ENCODE measurements at regions of chr1 and their contacts with region 1.

Region 1: GRCh38 chr1:116817582-116818064 is 63.4 kb downstream of the CD2 start:
- DNase-seq: peak; percentile 58
- H3K4me3 Mint-ChIP-seq: no peak overlapping the region
- H3K27ac Mint-ChIP-seq: peak overlapping the region; percentile 61
- H3K4me1 Mint-ChIP-seq: peaks cover 50% of the 10 kb centered on the region
- H3K27me3 Mint-ChIP-seq: no peaks in the 10 kb centered on the region

Region 2: DNA sequence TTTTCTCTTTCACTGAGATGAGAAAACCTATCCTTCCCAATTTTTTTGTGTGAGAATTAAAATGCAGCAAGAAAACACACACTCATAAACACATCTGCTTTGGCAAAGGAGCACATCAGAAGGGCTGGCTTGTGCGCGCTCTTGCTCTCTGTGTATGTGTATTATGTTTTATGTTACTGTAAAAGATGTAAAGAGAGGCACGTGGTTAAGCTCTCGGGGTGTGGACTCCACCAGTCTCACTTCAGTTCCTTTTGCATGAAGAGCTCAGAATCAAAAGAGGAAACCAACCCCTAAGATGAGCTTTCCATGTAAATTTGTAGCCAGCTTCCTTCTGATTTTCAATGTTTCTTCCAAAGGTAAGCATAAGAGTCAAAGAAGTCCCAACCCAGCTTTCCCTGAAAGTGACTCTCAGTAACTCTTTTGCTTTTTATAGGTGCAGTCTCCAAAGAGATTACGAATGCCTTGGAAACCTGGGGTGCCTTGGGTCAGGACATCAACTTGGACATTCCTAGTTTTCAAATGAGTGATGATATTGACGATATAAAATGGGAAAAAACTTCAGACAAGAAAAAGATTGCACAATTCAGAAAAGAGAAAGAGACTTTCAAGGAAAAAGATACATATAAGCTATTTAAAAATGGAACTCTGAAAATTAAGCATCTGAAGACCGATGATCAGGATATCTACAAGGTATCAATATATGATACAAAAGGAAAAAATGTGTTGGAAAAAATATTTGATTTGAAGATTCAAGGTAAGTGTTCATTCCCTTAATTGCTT is 63.2 kb before region 1 on chr1 and contains the start of gene CD2:
- intact Hi-C with region 1: loop called (anchors 1 kb)
- DNase-seq: no peak
- H3K4me3 Mint-ChIP-seq: peak within 1 kb of the TSS; percentile 99
- H3K27ac Mint-ChIP-seq: peak within 1 kb of the TSS; percentile 97
- H3K4me1 Mint-ChIP-seq: peaks cover 32% of the 10 kb centered on the region
- H3K27me3 Mint-ChIP-seq: no peaks in the 10 kb centered on the region
- total RNA-seq, gene CD2: 284 and 304 TPM in 2 replicates

Region 3: GRCh38 chr1:116794804-116795481 is 22.7 kb before region 1 on chr1:
- intact Hi-C with region 1: no loop called
- DNase-seq: no peak
- H3K4me3 Mint-ChIP-seq: no peak overlapping the region
- H3K27ac Mint-ChIP-seq: no peak overlapping the region
- H3K4me1 Mint-ChIP-seq: peaks cover 56% of the 10 kb centered on the region
- H3K27me3 Mint-ChIP-seq: no peaks in the 10 kb centered on the region

Region 4: DNA sequence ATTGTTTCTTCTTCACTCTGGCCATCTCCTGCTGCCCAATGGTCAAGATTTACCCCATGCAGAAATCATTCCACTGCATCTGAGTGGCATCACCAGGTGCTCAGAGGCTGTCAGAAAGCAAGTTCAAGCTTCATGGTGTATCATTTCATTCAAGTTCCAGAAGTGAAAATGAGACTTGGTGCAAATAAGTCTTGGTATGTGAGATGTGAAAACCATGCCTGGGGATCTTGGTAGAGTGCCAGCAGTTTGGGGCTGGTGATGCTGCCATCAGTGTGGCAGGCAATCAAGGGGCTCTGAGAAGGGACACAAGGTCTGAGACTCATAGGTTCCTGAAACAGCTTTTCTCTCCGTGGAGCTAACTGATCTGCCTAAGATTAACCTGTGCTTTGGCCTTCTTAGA is 11.4 kb before region 1 on chr1:
- intact Hi-C with region 1: loop called (anchors 1 kb)
- DNase-seq: peak; percentile 36
- H3K4me3 Mint-ChIP-seq: peak overlapping the region; percentile 79
- H3K27ac Mint-ChIP-seq: peak overlapping the region; percentile 90
- H3K4me1 Mint-ChIP-seq: peaks cover 84% of the 10 kb centered on the region
- H3K27me3 Mint-ChIP-seq: no peaks in the 10 kb centered on the region

Region 5: GRCh38 chr1:116827607-116828105 is 10.0 kb after region 1 on chr1:
- intact Hi-C with region 1: no loop called
- DNase-seq: no peak
- H3K4me3 Mint-ChIP-seq: peak overlapping the region; percentile 71
- H3K27ac Mint-ChIP-seq: peak overlapping the region; percentile 97
- H3K4me1 Mint-ChIP-seq: peaks cover 67% of the 10 kb centered on the region
- H3K27me3 Mint-ChIP-seq: no peaks in the 10 kb centered on the region

Region 6: DNA sequence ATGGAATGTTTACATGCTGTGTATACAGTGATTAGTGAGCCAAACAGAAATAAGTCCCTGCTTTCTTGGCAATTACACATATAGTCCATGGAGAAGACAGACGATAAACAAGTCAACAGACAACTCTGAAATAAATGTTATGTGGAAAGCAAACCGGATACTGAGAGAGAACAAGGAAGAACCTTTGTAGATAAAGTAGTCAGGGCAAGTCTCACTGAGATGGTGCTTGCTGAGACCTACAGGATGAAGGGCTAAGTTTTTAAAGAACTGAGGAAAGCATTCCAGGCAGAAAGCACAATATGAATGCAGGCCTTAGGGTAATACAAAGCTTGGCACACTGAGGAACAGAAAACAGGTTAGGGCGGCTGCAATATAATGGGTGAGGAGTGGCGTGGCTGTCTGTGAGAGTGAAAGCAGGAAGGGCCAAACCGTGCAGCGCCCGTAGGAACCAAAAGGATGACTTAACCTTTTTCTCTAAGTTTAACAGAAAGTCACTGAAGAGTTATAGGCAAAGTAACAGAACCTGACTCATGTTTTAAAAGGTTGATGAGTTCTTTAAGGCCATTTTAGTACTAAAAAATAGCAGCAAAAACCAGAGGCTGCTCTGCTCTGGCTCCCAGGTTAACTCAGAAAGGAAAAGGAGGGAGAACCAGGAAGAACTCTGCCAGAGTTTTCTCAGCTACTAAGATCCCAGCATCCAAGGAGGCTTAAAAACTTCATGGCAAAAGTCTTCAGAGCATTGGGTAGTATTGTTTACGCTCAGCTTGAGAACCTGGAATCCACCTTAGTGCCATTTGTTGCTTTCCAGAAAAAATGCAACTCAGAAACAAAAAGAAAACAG is 233.8 kb after region 1 on chr1:
- intact Hi-C with region 1: loop called (anchors 2 kb)
- DNase-seq: peak; percentile 33
- H3K4me3 Mint-ChIP-seq: peak overlapping the region; percentile 63
- H3K27ac Mint-ChIP-seq: peak overlapping the region; percentile 88
- H3K4me1 Mint-ChIP-seq: peaks cover 43% of the 10 kb centered on the region
- H3K27me3 Mint-ChIP-seq: no peaks in the 10 kb centered on the region